ENCODE measurements at regions of chr5 and their contacts with region 1.

Region 1: DNA sequence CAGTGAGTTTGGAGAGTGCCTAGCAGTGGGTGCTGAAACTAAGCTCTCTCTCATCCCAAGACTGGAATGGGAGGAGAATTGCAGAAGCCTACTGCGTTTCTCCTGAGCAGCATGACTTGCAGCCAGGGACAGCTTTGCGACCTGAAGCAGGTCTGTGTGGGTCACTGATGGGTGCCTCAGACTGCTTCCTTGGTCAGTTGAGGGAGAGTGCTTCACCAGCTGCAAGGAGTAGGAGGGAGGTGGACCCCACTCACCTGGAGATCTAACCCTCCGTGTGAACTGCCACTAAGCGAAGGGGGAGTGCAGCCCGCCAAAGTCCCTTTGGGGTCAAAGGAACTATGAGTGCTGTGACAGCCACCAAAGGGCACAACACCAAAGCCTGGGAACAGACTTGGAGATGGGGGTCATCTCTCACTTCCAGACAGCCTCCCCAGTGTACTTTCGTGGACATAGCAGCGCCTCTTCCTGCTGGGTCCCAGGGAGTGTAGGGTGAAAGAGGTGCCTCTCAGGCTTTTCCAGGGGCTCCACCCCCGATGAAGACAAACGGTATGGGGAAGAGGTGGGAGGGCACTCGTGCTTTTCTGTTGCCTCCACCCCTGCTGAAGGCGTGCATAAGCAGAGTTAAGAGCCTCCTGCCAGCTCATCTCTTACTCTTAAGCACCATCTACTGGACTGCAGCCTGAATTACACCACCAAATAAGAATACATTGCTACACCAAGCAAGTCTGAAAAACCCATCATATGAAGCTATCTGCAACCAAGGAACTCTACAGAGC is 34.3 kb upstream of the MACIR start:
- DNase-seq: peak; percentile 16
- ATAC-seq: peak; percentile 96
- H3K4me3 ChIP-seq: no peak overlapping the region
- H3K27ac ChIP-seq: no peak overlapping the region
- H3K4me1 ChIP-seq: no peaks in the 10 kb centered on the region
- H3K27me3 ChIP-seq: no peaks in the 10 kb centered on the region
- CTCF ChIP-seq: peak; percentile 70 to 85 (median 82)
- EP300 ChIP-seq: no peak
- POLR2A ChIP-seq: no peak
- RAD21 ChIP-seq: peak; percentile 84

Region 2: GRCh38 chr5:102536323-102536928 is 687.9 kb before region 1 on chr5:
- CTCF ChIA-PET with region 1: interaction called, 10 read pairs
- POLR2A ChIA-PET with region 1: no interaction called
- RAD21 ChIA-PET with region 1: interaction called, 6 read pairs
- SMC1A ChIA-PET with region 1: no interaction called
- in situ Hi-C with region 1: no loop called
- intact Hi-C with region 1: loop called (anchors 10 kb)
- DNase-seq: no peak
- ATAC-seq: no peak
- H3K4me3 ChIP-seq: no peak overlapping the region
- H3K27ac ChIP-seq: no peak overlapping the region
- H3K4me1 ChIP-seq: no peaks in the 10 kb centered on the region
- H3K27me3 ChIP-seq: no peaks in the 10 kb centered on the region
- CTCF ChIP-seq: peak in 1 of 3 experiments; percentile 23; a peak in 2 of 6 replicates
- EP300 ChIP-seq: no peak
- POLR2A ChIP-seq: no peak
- RAD21 ChIP-seq: peak; percentile 33; the same call in 1 of the 2 replicates

Region 3: DNA sequence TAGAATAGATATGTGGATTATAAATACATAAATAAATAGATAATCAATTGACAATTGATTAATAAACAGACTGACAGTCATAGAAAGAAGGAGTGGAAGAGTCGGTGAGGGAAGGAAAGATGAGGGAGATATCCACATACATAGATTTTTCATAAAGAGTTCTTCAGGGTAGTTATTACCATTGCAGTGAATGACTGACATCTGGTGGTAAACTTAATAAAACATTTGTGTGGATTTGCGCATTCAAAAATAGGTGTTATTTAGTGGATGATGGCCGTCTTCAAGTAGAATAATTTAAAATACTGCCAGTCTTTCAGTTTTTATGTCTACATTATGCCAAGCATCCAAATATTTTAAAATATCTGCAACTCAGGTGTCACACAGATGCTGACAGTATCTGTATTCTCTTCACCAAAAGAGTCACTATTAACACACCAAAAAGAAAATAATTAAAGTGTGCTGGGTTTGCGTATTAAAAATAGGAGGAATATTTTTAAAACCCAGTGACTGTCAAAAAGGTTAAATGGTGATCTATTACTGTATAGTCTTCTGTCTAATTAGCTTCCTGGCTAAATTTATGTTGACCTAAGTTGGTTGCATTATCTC is 183.1 kb before region 1 on chr5:
- CTCF ChIA-PET with region 1: interaction called, 5 read pairs
- POLR2A ChIA-PET with region 1: no interaction called
- RAD21 ChIA-PET with region 1: interaction called, 4 read pairs
- SMC1A ChIA-PET with region 1: interaction called, 3 read pairs
- in situ Hi-C with region 1: no loop called
- intact Hi-C with region 1: loop called (anchors 5 kb)
- DNase-seq: no peak
- ATAC-seq: peak; percentile 68
- H3K4me3 ChIP-seq: no peak overlapping the region
- H3K27ac ChIP-seq: no peak overlapping the region
- H3K4me1 ChIP-seq: no peaks in the 10 kb centered on the region
- H3K27me3 ChIP-seq: no peaks in the 10 kb centered on the region
- CTCF ChIP-seq: peak; percentile 16 to 58 (median 28); a peak in 4 of 6 replicates
- EP300 ChIP-seq: no peak
- POLR2A ChIP-seq: no peak
- RAD21 ChIP-seq: peak; percentile 79

Region 4: DNA sequence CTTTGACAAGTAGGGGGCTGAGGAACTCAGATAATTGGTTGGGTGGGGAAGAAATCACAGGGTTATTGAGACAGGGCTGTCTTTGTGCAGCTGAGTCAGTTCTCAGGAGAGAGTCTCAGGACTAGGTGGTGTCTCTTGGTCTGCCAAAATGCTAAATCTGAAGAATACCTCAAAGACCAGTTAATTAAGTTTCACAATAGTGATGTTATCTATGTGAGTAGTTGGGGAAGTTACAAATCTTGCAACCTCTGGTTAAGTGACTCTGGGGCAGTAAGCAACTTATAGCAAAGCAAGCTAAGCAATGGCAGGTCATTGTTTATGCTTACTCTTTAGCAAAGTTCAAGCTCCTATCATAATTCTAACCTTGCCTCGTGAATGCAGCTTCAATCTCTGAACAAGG is 158.0 kb before region 1 on chr5:
- CTCF ChIA-PET with region 1: no interaction called
- POLR2A ChIA-PET with region 1: no interaction called
- RAD21 ChIA-PET with region 1: no interaction called
- SMC1A ChIA-PET with region 1: no interaction called
- in situ Hi-C with region 1: no loop called
- intact Hi-C with region 1: no loop called
- DNase-seq: no peak
- ATAC-seq: peak; percentile 85
- H3K4me3 ChIP-seq: no peak overlapping the region
- H3K27ac ChIP-seq: no peak overlapping the region
- H3K4me1 ChIP-seq: no peaks in the 10 kb centered on the region
- H3K27me3 ChIP-seq: no peaks in the 10 kb centered on the region
- CTCF ChIP-seq: no peak
- EP300 ChIP-seq: no peak
- POLR2A ChIP-seq: no peak
- RAD21 ChIP-seq: no peak

Region 5: DNA sequence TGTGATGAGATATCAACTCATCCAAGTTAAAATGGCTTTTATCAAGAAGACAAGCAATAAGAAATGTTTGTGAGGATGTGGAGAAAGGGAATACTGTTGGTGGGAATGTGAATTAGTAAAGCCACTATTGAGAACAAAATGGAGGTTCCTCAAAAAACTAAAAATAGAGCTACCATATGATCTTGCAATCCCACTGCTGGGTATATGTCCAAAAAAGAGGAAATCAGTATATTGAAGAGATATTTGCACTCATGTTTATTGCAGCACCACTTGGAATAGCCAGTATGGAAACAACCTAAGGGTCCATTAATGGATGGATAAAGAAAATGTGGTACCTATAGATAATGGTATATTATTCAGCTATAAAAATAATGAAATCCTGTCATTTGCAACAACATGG is 79.1 kb before region 1 on chr5:
- CTCF ChIA-PET with region 1: interaction called, 26 read pairs
- POLR2A ChIA-PET with region 1: no interaction called
- RAD21 ChIA-PET with region 1: interaction called, 3 read pairs
- SMC1A ChIA-PET with region 1: interaction called, 7 read pairs
- in situ Hi-C with region 1: no loop called
- intact Hi-C with region 1: no loop called
- DNase-seq: no peak
- ATAC-seq: no peak
- H3K4me3 ChIP-seq: no peak overlapping the region
- H3K27ac ChIP-seq: no peak overlapping the region
- H3K4me1 ChIP-seq: no peaks in the 10 kb centered on the region
- H3K27me3 ChIP-seq: no peaks in the 10 kb centered on the region
- CTCF ChIP-seq: no peak
- EP300 ChIP-seq: no peak
- POLR2A ChIP-seq: no peak
- RAD21 ChIP-seq: no peak

Region 6: DNA sequence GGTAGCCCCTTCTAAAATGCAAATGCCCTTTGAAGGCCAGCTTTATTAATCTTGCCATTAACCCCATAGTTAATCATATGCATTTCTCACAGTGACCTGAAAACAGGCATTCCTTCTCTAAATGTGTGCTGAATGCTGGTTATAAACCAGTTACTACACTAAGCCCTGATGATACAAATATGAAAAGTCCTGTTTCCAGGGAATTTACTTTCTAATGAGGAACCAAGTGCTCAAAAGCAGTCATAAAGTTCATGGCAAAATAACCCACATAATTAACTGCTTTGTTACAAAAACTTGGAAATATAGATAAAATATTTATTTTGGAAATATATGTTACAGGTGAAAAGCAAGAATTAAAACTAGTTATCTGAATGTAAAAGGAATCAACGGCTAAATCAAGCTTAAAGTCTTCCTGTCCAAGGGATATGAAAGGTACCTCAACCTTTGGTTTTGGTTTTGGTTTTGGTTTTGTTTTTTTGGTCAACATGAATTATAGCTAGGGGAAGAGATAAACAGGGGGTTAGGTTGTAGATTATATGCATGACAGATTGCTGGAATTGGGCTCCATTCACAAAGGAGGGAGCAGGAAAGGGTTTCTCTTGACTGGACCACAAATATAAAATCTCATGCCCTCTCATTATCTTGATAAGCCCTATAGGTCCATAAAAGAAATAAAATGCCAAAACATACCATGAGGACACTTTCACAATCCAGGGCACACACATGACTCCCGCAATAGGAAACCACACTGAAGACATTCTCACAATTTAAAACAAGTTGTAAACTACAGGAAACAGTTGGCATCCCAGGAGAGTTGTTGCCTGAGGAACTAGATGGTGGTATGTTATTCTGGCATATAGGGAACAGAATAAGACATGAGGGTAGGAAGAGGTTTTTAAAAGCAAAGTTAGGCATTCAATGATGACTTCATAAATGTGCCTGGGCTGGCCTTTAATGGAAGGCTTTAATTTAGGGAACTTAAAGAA is 12.4 kb before region 1 on chr5:
- CTCF ChIA-PET with region 1: interaction called, 45 read pairs
- POLR2A ChIA-PET with region 1: no interaction called
- RAD21 ChIA-PET with region 1: interaction called, 5 read pairs
- SMC1A ChIA-PET with region 1: interaction called, 15 read pairs
- in situ Hi-C with region 1: no loop called
- intact Hi-C with region 1: no loop called
- DNase-seq: no peak
- ATAC-seq: peak; percentile 88
- H3K4me3 ChIP-seq: no peak overlapping the region
- H3K27ac ChIP-seq: peak overlapping the region; percentile 39; the same call in 1 of the 2 replicates
- H3K4me1 ChIP-seq: no peaks in the 10 kb centered on the region
- H3K27me3 ChIP-seq: no peaks in the 10 kb centered on the region
- CTCF ChIP-seq: no peak
- EP300 ChIP-seq: no peak
- POLR2A ChIP-seq: no peak
- RAD21 ChIP-seq: no peak

Region 7: GRCh38 chr5:103393101-103393754 is 168.9 kb after region 1 on chr5:
- CTCF ChIA-PET with region 1: no interaction called
- POLR2A ChIA-PET with region 1: no interaction called
- RAD21 ChIA-PET with region 1: no interaction called
- SMC1A ChIA-PET with region 1: no interaction called
- in situ Hi-C with region 1: no loop called
- intact Hi-C with region 1: no loop called
- DNase-seq: peak; percentile 3
- ATAC-seq: peak; percentile 31
- H3K4me3 ChIP-seq: no peak overlapping the region
- H3K27ac ChIP-seq: no peak overlapping the region
- H3K4me1 ChIP-seq: no peaks in the 10 kb centered on the region
- H3K27me3 ChIP-seq: peaks cover 0 to 2% of the 10 kb centered on the region in 2 experiments; a peak in 1 of 4 replicates
- CTCF ChIP-seq: no peak
- EP300 ChIP-seq: no peak
- POLR2A ChIP-seq: no peak
- RAD21 ChIP-seq: no peak

Region 8: GRCh38 chr5:103475629-103476240 is 251.4 kb after region 1 on chr5:
- CTCF ChIA-PET with region 1: interaction called, 23 read pairs
- POLR2A ChIA-PET with region 1: no interaction called
- RAD21 ChIA-PET with region 1: interaction called, 3 read pairs
- SMC1A ChIA-PET with region 1: interaction called, 14 read pairs
- in situ Hi-C with region 1: no loop called
- intact Hi-C with region 1: no loop called
- DNase-seq: no peak
- ATAC-seq: peak; percentile 73
- H3K4me3 ChIP-seq: no peak overlapping the region
- H3K27ac ChIP-seq: no peak overlapping the region
- H3K4me1 ChIP-seq: no peaks in the 10 kb centered on the region
- H3K27me3 ChIP-seq: no peaks in the 10 kb centered on the region; a peak in 1 of 4 replicates
- CTCF ChIP-seq: peak; percentile 45 to 74 (median 53)
- EP300 ChIP-seq: no peak
- POLR2A ChIP-seq: no peak
- RAD21 ChIP-seq: peak; percentile 85

Measured in GM12878 (cell line).